Activated CD4-positive, alpha-beta T cell treated with anti-CD3 and anti-CD28 coated beads, Interleukin-2, amount 10 ng/mL, durations not matched to agents 24 days and 14 days (primary cell): ENCODE measurements at regions of chr16 and their contacts with region 1.

Region 1: DNA sequence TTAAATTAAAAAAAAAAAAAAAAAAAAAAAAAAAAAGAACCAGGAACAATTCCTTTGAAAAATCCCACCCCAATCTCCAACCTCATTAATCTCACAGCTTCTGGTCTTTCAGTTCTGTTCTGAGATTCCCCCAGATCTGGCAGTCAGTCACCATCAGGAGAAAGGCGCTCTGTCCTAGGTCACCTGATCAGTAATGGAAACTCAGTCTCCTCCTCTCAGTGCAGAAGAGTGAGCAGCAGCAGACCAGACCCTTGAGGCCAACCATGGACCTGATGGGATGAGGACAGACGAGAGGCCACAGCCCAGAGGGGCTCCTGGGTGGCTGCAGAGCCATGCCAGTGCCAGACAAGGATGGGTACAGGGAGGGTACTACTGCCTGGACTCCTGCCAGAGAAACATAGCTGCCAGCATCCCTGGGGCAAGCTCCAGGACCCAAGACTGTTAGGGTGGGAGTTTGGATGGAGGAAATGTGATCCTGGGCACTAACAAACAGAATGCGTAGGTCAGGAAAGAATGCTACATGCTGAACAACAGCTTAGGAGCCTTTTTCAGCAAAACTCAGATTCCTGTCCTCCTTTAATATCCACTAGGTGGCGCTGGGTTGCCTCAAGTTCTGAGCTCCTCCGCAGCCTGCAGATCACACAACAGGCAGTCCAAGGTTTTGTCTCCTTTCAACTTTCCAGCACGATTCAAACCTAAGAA is 28.7 kb downstream of the MPG start:
- DNase-seq: peak; percentile 88
- H3K4me3 Mint-ChIP-seq: no peak overlapping the region
- H3K27ac Mint-ChIP-seq: no peak overlapping the region
- H3K4me1 Mint-ChIP-seq: no peaks in the 10 kb centered on the region
- H3K27me3 Mint-ChIP-seq: no peaks in the 10 kb centered on the region

Region 2: GRCh38 chr16:180938-181667 is 74.3 kb after region 1 on chr16:
- intact Hi-C with region 1: loop called (anchors 1 kb)
- DNase-seq: peak; percentile 96
- H3K4me3 Mint-ChIP-seq: peak overlapping the region; percentile 40
- H3K27ac Mint-ChIP-seq: no peak overlapping the region
- H3K4me1 Mint-ChIP-seq: no peaks in the 10 kb centered on the region
- H3K27me3 Mint-ChIP-seq: peaks cover 25% of the 10 kb centered on the region

Region 3: DNA sequence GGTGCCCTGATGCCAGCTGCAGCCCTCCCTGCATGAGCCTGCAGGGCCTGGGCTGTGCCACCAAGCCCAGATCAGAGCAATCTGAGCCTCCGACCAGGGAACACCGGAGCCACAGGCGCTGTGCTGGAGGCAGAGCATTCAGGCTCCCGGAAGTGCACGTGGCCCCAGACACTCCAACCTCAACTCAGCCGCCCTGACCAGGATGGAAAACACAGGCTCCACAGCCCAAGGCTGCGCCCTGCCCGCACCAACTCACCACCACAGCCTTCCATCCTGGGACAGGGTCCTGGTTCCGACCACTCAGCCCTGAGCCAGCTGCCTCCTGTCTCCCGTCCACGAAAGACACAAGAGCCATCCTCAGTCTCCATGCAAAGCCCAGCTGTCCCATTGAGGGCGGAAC is 845.5 kb after region 1 on chr16:
- intact Hi-C with region 1: no loop called
- DNase-seq: no peak
- H3K4me3 Mint-ChIP-seq: no peak overlapping the region
- H3K27ac Mint-ChIP-seq: peak overlapping the region; percentile 56
- H3K4me1 Mint-ChIP-seq: no peaks in the 10 kb centered on the region
- H3K27me3 Mint-ChIP-seq: no peaks in the 10 kb centered on the region